Naive thymus-derived CD4-positive, alpha-beta T cell (primary cell): ENCODE measurements at regions of chr14 and their contacts with region 1.

Region 1: DNA sequence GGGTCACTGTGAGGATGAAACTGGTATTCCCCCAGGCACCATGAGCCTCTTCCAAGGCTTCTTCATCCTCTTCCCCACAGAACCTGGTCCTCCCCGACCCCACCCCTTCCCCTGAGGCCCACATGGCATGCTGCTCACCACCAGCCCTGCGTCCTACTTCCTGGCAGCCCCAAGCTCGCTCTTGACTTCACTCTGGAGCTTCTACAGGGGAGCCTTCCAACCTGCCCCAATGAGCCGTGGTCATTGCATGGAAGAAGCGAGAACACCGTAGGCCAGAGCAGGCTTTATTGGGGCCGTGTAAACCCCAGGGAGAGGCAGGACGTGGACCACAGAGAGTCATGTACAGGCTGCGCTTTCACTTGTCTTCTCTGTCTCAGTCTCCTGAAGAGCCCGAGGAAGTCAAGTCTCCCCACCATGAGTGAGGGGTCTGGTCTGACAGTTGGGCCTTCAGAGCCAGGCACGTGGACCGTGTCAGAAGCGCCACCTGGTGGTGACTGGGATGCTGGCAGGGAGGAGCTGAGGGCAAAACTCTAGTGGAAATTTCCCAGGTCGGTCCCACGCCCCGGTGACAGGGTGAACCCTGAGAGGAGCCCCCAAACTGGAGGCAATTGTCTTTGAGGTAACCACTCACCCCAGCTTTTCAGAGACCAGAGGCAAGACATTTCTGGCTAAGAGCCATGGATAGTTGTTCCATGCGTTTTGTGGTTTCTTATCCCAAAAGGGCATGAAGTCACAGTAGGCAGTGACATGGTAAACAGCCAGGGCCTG is 17.5 kb downstream of the RPS6KL1 start:
- DNase-seq: peak; percentile 56 to 83 (median 71)
- ATAC-seq: peak; percentile 76
- H3K4me3 ChIP-seq: no peak overlapping the region
- H3K4me3 Mint-ChIP-seq: no peak overlapping the region
- H3K27ac ChIP-seq: peak overlapping the region; percentile 38
- H3K27ac Mint-ChIP-seq: peak overlapping the region in 5 of 9 donors; percentile 48 to 81 (median 77)
- H3K4me1 ChIP-seq: peaks cover 0 to 6% of the 10 kb centered on the region in 2 donors
- H3K4me1 Mint-ChIP-seq: peaks cover 0 to 23% (median 4%) of the 10 kb centered on the region in 7 donors
- H3K27me3 ChIP-seq: no peaks in the 10 kb centered on the region
- H3K27me3 Mint-ChIP-seq: no peaks in the 10 kb centered on the region

Region 2: DNA sequence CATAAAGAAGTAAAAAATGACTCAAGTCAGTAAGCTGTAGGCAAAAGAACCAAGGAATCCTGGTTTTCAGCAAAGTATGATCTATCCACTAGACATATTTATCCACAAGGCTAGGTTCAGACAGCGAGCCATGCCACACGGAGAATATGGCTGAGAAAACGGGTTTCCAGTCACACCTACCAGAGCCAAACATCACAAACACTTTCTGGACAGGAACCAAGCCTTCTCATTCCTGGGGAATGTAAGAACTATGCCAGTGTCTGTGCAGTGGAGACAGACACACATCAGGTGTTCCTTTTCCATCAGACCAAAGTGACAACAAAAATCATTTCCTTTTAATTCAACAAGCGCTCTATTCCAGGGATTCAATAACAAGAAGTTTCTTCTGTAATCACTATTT is 233.8 kb before region 1 on chr14:
- CTCF ChIA-PET with region 1: no interaction called
- POLR2A ChIA-PET with region 1: no interaction called
- intact Hi-C with region 1: no loop called
- DNase-seq: no peak
- ATAC-seq: no peak
- H3K4me3 ChIP-seq: no peak overlapping the region
- H3K4me3 Mint-ChIP-seq: no peak overlapping the region
- H3K27ac ChIP-seq: no peak overlapping the region
- H3K27ac Mint-ChIP-seq: peak overlapping the region in 1 of 9 donors; percentile 65
- H3K4me1 ChIP-seq: no peaks in the 10 kb centered on the region
- H3K4me1 Mint-ChIP-seq: peaks cover 0 to 5% (median 0%) of the 10 kb centered on the region in 7 donors
- H3K27me3 ChIP-seq: no peaks in the 10 kb centered on the region
- H3K27me3 Mint-ChIP-seq: no peaks in the 10 kb centered on the region

Region 3: GRCh38 chr14:74867673-74868072 is 37.9 kb before region 1 on chr14:
- CTCF ChIA-PET with region 1: interaction called, 317 read pairs
- POLR2A ChIA-PET with region 1: interaction called, 39 read pairs
- intact Hi-C with region 1: no loop called
- DNase-seq: peak in 6 of 9 donors; percentile 32 to 51 (median 37)
- ATAC-seq: peak; percentile 87
- H3K4me3 ChIP-seq: peak overlapping the region; percentile 27
- H3K4me3 Mint-ChIP-seq: peak overlapping the region; percentile 0 to 60 (median 39)
- H3K27ac ChIP-seq: peak overlapping the region; percentile 40
- H3K27ac Mint-ChIP-seq: peak overlapping the region in 7 of 9 donors; percentile 4 to 77 (median 45)
- H3K4me1 ChIP-seq: peaks cover 11 to 15% of the 10 kb centered on the region in 2 donors
- H3K4me1 Mint-ChIP-seq: peaks cover 17 to 31% (median 24%) of the 10 kb centered on the region in 7 donors
- H3K27me3 ChIP-seq: no peaks in the 10 kb centered on the region
- H3K27me3 Mint-ChIP-seq: peaks cover 0 to 2% (median 0%) of the 10 kb centered on the region in 5 donors

Region 4: DNA sequence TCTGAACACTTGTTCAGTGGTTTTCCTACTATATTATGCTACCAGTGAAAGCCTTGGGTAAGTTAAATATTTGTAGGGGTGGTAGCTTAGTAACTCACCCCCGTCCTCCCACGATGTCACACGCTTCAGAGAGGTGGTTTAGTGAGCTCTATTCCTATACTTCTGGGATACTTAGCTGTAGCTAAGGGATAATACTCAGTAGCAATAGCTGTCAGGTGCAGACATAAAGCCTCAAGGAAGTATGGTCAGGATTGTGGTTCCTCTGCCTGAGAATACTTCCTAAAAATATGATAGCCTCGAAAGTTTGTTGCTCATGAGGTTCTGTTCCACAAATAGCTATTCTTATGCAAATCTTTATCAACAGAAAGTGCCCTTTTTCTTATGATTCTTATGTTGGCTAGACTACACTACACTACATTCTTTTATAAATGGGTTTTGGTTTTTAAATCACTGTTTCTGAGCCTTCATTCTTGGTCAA is 11.9 kb before region 1 on chr14:
- CTCF ChIA-PET with region 1: interaction called, 22 read pairs
- POLR2A ChIA-PET with region 1: interaction called, 3 read pairs
- intact Hi-C with region 1: no loop called
- DNase-seq: no peak
- ATAC-seq: peak; percentile 47
- H3K4me3 ChIP-seq: no peak overlapping the region
- H3K4me3 Mint-ChIP-seq: no peak overlapping the region
- H3K27ac ChIP-seq: no peak overlapping the region
- H3K27ac Mint-ChIP-seq: peak overlapping the region in 5 of 9 donors; percentile 9 to 78 (median 36)
- H3K4me1 ChIP-seq: no peaks in the 10 kb centered on the region
- H3K4me1 Mint-ChIP-seq: peaks cover 0 to 11% (median 7%) of the 10 kb centered on the region in 7 donors
- H3K27me3 ChIP-seq: no peaks in the 10 kb centered on the region
- H3K27me3 Mint-ChIP-seq: no peaks in the 10 kb centered on the region

Region 5: GRCh38 chr14:75088574-75089373 is 183.2 kb after region 1 on chr14:
- CTCF ChIA-PET with region 1: interaction called, 4 read pairs
- POLR2A ChIA-PET with region 1: interaction called, 7 read pairs
- intact Hi-C with region 1: loop called in 1 of 2 experiments (anchors 2 kb)
- DNase-seq: peak in 7 of 9 donors; percentile 27 to 55 (median 47)
- ATAC-seq: peak; percentile 67
- H3K4me3 ChIP-seq: no peak overlapping the region
- H3K4me3 Mint-ChIP-seq: no peak overlapping the region
- H3K27ac ChIP-seq: no peak overlapping the region
- H3K27ac Mint-ChIP-seq: peak overlapping the region in 1 of 9 donors; percentile 40
- H3K4me1 ChIP-seq: no peaks in the 10 kb centered on the region
- H3K4me1 Mint-ChIP-seq: no peaks in the 10 kb centered on the region
- H3K27me3 ChIP-seq: no peaks in the 10 kb centered on the region
- H3K27me3 Mint-ChIP-seq: no peaks in the 10 kb centered on the region